ENCODE measurements at regions of chr11 and their contacts with region 1.

Region 1: GRCh38 chr11:71080239-71081097 is 171.9 kb downstream of the SHANK2 start:
- DNase-seq: no peak
- ATAC-seq: peak; percentile 39

Region 2: GRCh38 chr11:70931430-70931829 is 149.0 kb before region 1 on chr11:
- intact Hi-C with region 1: loop called (anchors 1 kb)
- DNase-seq: no peak
- ATAC-seq: peak; percentile 95

Region 3: DNA sequence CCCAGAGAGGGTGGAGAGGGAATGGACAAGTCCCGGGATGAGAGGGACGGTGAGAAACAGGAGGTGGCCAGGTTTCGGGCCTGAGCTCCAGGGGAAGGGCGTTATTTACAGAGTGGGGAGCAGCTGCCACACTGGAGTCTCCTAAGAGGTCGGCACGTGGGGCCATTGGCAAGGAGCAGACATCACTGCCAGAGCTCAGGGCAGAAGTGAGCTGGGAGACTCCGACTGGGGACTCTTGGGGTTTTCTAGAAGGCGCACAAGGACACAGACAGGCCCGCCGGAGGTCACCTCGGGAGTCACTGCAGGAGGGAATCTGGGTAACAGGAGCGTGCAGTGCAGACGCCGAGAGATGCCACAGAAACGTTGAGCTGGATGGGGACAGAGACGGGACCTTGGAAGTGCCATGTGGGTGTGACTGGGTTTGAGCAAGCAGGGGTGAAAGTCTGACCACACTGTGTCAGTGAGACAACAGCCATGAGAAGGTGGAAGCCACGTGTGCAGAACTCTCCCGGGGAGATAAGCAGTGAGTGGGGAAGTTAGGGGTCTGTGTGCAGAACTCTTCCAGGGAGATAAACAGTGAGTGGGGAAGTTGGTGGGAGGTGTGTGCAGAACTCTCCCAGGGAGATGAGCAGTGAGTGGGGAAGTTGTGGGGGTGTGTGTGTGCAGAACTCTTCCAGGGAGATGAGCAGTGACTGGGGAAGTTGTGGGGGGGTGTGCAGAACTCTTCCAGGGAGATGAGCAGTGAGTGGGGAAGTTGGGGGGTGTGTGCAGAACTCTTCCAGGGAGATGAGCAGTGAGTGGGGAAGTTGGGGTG is 15.6 kb before region 1 on chr11:
- intact Hi-C with region 1: no loop called
- DNase-seq: no peak
- ATAC-seq: no peak